Endothelial cell of umbilical vein (primary cell): ENCODE measurements at regions of chr2 and their contacts with region 1.

Region 1: GRCh38 chr2:85017411-85018048 is 46.6 kb downstream of the KCMF1 start:
- DNase-seq: peak; percentile 61
- H3K4me3 ChIP-seq: no peak overlapping the region
- H3K27ac ChIP-seq: peak overlapping the region; percentile 21
- H3K4me1 ChIP-seq: peaks cover 22% of the 10 kb centered on the region
- H3K27me3 ChIP-seq: no peaks in the 10 kb centered on the region
- CTCF ChIP-seq: no peak
- POLR2A ChIP-seq: no peak

Region 2: GRCh38 chr2:84970868-84971509 is 46.5 kb before region 1 on chr2 and contains the start of gene KCMF1:
- CTCF ChIA-PET with region 1: interaction called, 11 read pairs
- POLR2A ChIA-PET with region 1: interaction called, 7 read pairs
- dilution Hi-C with region 1: no loop called
- intact Hi-C with region 1: loop called (anchors 2 kb)
- DNase-seq: peak; percentile 30
- H3K4me3 ChIP-seq: peak within 1 kb of the TSS; percentile 92 to 98 (median 97)
- H3K27ac ChIP-seq: peak within 1 kb of the TSS; percentile 96
- H3K4me1 ChIP-seq: peaks cover 18% of the 10 kb centered on the region
- H3K27me3 ChIP-seq: no peaks in the 10 kb centered on the region
- CTCF ChIP-seq: no peak
- POLR2A ChIP-seq: no peak
- total RNA-seq, gene KCMF1: 75.9 and 78.4 TPM in 2 replicates

Region 3: DNA sequence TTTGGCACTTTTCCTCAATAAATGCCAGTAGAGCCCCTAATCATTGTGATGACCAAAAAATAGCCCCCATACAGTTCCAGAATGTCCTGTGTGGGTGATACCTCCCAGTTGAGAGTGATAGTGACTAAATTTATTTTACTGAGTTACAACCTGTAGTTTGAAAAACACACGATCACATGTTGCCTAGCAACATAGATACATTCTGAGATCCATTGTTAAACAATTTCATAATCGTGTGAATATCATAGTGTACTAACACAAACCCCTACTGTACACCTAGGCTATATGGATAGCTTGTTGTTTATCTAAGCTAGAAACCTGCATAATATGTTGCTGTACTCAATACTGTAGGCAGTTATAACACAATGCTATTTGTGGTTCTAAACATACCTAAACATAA is 15.9 kb before region 1 on chr2:
- CTCF ChIA-PET with region 1: interaction called, 13 read pairs
- POLR2A ChIA-PET with region 1: no interaction called
- dilution Hi-C with region 1: no loop called
- intact Hi-C with region 1: no loop called
- DNase-seq: no peak
- H3K4me3 ChIP-seq: no peak overlapping the region
- H3K27ac ChIP-seq: no peak overlapping the region
- H3K4me1 ChIP-seq: peaks cover 8% of the 10 kb centered on the region
- H3K27me3 ChIP-seq: no peaks in the 10 kb centered on the region
- CTCF ChIP-seq: no peak
- POLR2A ChIP-seq: no peak

Region 4: GRCh38 chr2:85032621-85033020 is 15.1 kb after region 1 on chr2:
- CTCF ChIA-PET with region 1: interaction called, 15 read pairs
- POLR2A ChIA-PET with region 1: interaction called, 8 read pairs
- dilution Hi-C with region 1: no loop called
- intact Hi-C with region 1: no loop called
- DNase-seq: no peak
- H3K4me3 ChIP-seq: no peak overlapping the region
- H3K27ac ChIP-seq: no peak overlapping the region
- H3K4me1 ChIP-seq: no peaks in the 10 kb centered on the region
- H3K27me3 ChIP-seq: no peaks in the 10 kb centered on the region
- CTCF ChIP-seq: no peak
- POLR2A ChIP-seq: no peak

Region 5: DNA sequence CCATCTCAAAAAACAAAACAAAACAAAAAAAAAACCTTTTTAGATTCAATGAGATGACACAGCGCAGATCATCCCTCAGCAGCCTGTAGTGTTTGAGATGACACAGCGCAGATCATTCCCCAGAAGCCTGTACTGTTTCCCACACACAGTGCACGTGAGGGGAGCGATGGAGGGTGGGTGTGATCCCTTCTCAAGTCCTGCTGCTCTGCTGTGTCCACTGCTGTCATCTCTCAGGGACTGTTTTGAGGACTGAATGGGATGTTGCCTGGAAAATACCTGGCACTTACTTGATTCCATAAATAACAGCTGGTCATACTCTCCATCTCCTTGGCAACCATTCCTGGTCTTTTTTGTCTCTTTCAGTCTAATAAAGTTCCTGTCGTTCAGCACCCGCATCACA is 284.6 kb after region 1 on chr2:
- CTCF ChIA-PET with region 1: interaction called, 15 read pairs
- POLR2A ChIA-PET with region 1: no interaction called
- dilution Hi-C with region 1: no loop called
- intact Hi-C with region 1: no loop called
- DNase-seq: no peak
- H3K4me3 ChIP-seq: no peak overlapping the region
- H3K27ac ChIP-seq: no peak overlapping the region
- H3K4me1 ChIP-seq: no peaks in the 10 kb centered on the region
- H3K27me3 ChIP-seq: no peaks in the 10 kb centered on the region
- CTCF ChIP-seq: no peak
- POLR2A ChIP-seq: no peak